Common myeloid progenitor, CD34-positive (primary cell): ENCODE measurements at regions of chr3 and their contacts with region 1.

Region 1: DNA sequence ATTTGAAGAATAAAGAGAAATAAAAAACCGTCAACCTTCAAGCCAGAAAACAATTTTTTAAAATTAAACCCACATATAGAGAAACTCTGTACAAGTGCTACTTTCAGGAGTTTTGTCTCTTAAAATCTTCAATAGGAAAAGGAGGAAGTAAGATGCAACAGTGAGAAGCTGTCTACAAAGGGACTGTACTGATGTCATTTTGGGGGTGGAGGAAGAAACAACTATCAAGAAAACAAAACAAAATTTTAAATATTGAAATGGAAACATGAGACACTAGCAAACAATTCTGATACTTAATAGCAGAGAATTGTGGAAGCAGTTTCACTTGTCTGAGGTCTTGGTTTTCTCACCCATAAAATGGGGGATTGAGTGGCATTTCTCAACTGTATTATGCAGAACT is 84.4 kb downstream of the SLMAP start:
- DNase-seq: peak in 2 of 3 donors; percentile 38 to 52
- H3K4me3 ChIP-seq: no peak overlapping the region
- H3K27ac ChIP-seq: no peak overlapping the region
- H3K4me1 ChIP-seq: no peaks in the 10 kb centered on the region
- H3K27me3 ChIP-seq: no peaks in the 10 kb centered on the region

Region 2: GRCh38 chr3:57757642-57758297 is 82.7 kb before region 1 on chr3:
- CTCF ChIA-PET with region 1: no interaction called
- POLR2A ChIA-PET with region 1: no interaction called
- DNase-seq: no peak
- H3K4me3 ChIP-seq: peak overlapping the region; percentile 89 to 100 (median 93)
- H3K27ac ChIP-seq: no peak overlapping the region
- H3K4me1 ChIP-seq: peaks cover 11 to 33% (median 22%) of the 10 kb centered on the region in 4 experiments
- H3K27me3 ChIP-seq: no peaks in the 10 kb centered on the region

Region 3: DNA sequence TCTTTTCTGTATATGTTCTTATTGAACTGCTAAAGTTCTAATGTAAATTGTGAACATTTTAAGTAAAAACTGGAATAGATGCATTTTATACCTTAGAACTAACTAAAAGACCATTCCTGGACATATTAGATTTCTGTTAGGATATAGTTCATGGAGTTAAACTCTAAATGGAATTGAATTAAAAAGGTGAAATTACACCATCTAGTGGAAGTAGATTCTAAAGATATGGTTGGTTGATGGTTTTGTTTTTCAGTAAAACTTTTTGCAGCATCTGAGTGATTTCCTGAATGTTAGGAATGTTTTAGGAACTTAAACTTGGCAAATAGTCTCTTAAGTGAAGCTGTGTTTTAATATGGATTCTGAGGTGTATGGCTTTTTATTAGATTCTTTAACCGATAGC is 12.4 kb after region 1 on chr3:
- CTCF ChIA-PET with region 1: interaction called, 11 read pairs
- POLR2A ChIA-PET with region 1: no interaction called
- DNase-seq: peak; percentile 9 to 21 (median 17)
- H3K4me3 ChIP-seq: no peak overlapping the region
- H3K27ac ChIP-seq: no peak overlapping the region
- H3K4me1 ChIP-seq: peaks cover 0 to 2% (median 0%) of the 10 kb centered on the region in 4 experiments
- H3K27me3 ChIP-seq: no peaks in the 10 kb centered on the region